Activated T-helper 1 cell treated with anti-CD3 and anti-CD28 coated beads, Interleukin-12 subunit alpha, Interleukin-12 subunit beta, Interleukin-2, Interleukin-4 antibody, amounts not matched to agents 30 ng/mL and 10 ng/mL and 1 ng/mL, durations not matched to agents 14 hours and 24 hours and 36 hours (primary cell): ENCODE measurements at regions of chr6 and their contacts with region 1.

Region 1: DNA sequence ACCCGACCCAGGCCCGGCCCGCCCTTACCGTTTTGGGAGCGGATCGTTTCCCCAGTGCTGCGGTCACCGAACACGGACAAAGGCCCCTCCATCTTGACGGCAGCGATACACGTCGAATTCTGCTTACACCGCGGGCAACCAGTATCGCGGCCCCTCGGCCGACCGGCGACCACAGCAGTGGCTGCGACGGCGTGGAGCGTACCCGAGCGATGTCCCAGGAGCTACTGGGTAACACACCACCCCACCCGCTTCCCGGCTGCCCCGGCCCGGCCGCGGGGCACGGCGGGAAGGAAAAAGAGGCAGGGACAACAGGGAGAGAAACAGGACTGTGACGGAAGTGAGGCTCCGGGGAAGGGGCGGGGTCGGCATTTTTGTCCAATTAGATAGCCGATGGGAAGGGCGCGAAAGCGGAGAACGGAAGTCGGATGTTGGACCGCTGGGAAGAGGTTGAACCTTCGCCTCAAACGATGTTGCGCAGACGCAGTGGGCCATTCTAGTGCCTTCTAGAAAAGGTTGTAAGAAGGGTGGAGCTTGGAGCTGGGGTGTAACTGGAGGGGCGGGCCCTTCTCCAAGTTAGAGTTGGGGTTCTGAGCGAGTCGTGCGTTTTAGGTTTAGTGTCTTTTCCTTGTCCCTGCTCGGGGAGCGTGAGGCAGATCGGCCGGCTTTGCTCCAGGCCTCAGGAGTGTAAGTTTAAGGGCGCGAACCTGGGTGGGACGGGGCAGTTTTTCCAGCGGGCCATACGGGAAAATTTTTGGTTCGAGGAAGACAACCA is at the start of gene TCP1:
- DNase-seq: peak; percentile 99
- H3K4me3 Mint-ChIP-seq: peak within 1 kb of the TSS; percentile 96
- H3K27ac Mint-ChIP-seq: peak within 1 kb of the TSS; percentile 98
- H3K4me1 Mint-ChIP-seq: peaks cover 67% of the 10 kb centered on the region
- H3K27me3 Mint-ChIP-seq: no peaks in the 10 kb centered on the region
- total RNA-seq, gene TCP1: 454 and 457 TPM in 2 replicates

Region 2: DNA sequence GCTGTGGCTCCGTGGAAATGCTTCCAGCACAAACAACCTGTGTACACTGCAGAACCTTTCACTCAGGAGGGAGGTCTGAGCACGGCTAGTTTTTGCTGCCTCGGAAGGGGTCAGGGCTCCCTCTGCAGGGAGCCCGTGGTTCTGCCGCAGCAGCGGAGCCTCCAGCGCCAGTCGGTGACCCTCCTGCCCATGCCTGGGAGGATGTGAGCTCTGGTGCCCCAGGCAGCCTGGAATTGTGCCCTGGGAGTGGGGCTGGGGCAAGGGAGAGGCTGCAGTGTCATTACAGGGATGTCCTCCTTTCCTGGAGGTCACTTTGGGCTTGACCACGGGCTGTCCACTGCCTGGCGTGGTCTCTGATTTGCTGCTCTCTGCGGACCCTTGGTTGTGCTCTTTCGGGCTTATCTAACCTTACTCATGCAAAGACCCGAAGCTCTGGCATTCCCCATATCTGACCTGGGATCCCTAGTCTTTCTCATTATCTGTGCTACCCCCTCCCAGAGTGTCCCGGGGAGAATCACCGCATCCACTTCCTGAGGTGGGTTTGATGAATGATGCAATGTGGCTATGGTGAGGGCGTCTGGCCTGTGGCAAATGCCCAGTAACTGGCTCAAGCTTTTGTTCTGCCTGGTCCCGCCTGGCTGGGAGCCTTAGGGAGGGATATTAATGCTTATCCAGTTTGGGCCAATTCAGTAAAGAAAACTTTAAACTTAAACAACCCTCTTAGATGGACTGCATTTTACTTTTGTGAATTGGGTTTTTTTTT is 685.2 kb before region 1 on chr6:
- intact Hi-C with region 1: loop called (anchors 5 kb)
- DNase-seq: peak; percentile 69
- H3K4me3 Mint-ChIP-seq: peak overlapping the region; percentile 67
- H3K27ac Mint-ChIP-seq: peak overlapping the region; percentile 63
- H3K4me1 Mint-ChIP-seq: peaks cover 80% of the 10 kb centered on the region
- H3K27me3 Mint-ChIP-seq: no peaks in the 10 kb centered on the region

Region 3: GRCh38 chr6:159754959-159755914 is 34.3 kb before region 1 on chr6:
- intact Hi-C with region 1: loop called (anchors 5 kb)
- DNase-seq: no peak
- H3K4me3 Mint-ChIP-seq: no peak overlapping the region
- H3K27ac Mint-ChIP-seq: no peak overlapping the region
- H3K4me1 Mint-ChIP-seq: peaks cover 27% of the 10 kb centered on the region
- H3K27me3 Mint-ChIP-seq: no peaks in the 10 kb centered on the region

Region 4: DNA sequence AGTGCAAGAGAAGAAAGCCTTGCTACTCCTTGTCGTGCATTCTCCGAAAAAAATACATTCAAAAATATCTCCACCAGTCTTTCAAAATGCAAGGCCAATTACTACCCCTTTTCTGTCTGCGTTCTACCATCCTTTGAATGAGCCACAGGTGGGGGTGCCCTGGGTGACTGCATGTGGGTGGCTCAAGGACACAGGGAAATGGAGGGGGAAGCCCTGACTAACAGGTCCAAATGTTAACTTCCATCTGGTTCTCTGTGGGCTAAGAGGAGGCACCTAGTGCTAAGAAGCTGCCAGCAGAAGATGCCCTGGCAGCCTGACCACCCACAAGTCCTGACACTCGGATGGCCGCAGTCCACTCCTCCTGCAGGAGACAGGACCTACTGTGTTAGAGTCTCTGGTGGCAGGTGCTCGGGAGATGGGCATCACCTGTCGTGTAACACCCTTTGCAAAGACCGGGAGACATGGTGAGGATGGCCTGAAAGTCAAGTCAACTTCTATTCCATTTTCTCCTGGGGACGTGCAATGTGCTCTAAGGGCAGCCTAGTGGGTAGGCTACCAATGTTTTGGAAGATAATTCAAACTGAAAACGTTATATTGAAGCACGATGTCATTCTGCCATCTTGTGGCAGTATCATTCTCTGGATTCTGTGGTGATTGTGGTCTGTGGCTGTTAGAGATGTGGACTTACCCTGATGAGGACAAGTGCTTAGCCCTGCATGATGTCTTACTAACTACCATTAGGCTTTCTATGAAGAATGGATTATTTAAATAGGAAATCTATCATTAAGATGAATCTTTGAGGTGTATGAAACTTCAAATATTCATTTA is 151.9 kb after region 1 on chr6:
- intact Hi-C with region 1: loop called (anchors 1 kb)
- DNase-seq: peak; percentile 26
- H3K4me3 Mint-ChIP-seq: no peak overlapping the region
- H3K27ac Mint-ChIP-seq: no peak overlapping the region
- H3K4me1 Mint-ChIP-seq: peaks cover 10% of the 10 kb centered on the region
- H3K27me3 Mint-ChIP-seq: peaks cover 23% of the 10 kb centered on the region

Region 5: DNA sequence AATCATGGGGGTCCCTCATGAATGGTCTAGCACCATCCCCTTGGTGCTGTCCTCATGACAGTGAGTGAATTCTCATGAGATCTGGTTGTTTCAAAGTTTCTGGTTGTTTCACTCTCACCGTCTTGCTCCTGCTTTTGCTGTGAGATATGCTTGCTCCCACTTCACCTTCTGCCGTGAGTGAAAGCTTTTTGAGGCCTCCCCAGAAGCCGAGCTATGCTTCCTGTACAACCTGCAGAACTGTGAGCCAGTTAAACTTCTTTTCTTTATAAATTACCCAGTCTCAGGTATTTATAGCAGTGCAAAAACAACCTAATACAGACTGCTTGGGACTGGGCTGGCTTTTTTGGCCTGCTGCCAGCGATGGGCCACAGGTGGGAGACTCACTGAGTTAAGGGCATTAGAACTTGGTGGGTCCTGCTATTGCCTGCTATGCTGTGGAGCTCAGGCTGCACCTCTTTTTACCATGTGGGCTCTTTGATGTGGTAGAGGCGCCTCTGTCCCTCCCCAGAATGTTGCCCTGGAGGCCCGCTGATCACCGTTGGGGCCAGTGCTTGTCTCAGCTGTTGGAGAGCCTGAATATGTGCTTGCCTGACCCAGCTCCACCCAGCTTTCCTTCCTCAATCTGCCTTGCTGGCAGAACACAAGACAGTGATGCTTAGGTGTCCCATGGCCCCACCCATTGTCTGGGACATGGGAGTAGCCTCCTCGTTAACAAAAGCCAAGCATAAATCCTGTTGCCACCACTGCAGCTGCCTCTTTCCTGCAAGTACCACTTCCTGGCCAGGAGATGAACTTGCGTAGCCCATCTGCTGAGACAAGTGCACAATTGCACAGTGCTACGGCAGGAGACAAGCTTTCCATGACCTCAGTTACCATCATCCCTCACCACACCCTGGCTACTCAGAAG is 226.5 kb after region 1 on chr6:
- intact Hi-C with region 1: loop called (anchors 1 kb)
- DNase-seq: peak; percentile 64
- H3K4me3 Mint-ChIP-seq: peak overlapping the region; percentile 75
- H3K27ac Mint-ChIP-seq: peak overlapping the region; percentile 98
- H3K4me1 Mint-ChIP-seq: peaks cover 86% of the 10 kb centered on the region
- H3K27me3 Mint-ChIP-seq: no peaks in the 10 kb centered on the region